ENCODE measurements at regions of chr10 and their contacts with region 1.

Region 1: DNA sequence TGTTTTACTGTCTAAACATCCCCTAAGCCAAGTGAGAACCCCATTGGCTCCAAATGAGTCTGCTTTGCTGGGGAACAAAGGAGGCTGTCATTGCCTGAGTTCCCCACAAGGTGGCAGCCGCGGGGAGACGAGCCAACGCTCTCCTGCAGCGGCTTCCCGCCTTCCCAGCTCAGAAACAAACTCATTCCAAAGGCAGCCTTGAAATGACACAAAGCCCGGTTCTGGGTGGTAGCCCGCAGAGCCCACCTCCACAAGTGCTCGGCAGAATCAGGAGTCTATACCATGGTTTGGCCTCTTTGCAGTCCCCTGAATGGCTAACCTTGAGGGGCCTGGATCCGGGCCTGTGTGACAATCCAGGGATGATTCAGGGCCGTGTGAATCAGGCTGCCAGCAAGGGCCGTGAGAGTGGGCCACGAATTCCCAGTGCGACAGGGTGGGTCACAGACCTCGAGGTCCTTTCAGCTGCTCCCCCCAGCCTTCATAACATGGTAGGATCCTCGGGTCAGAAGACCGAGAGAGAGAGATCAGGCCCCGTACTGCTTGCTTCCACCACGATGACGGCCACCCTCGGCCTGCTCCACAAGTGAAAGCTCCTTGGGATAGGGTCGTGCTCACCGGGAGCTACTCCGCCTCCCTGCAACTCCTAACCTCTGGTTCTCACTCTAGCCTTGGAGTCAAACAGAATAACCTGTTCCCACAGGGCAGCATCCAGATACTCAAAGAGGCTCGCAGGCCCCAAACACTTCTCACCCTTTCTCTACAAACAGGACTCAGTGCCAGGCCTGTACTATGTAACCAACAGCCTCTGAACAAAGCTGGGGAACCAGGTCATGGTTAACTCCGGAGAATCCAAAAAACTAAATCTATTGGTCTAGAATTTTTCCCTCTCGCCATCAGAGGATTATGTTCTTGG is 79.6 kb downstream of the DLG5 start:
- DNase-seq: peak; percentile 98
- ATAC-seq: peak; percentile 68
- H3K4me3 ChIP-seq: no peak overlapping the region
- H3K27ac ChIP-seq: peak overlapping the region; percentile 1
- H3K4me1 ChIP-seq: peaks cover 30% of the 10 kb centered on the region
- H3K27me3 ChIP-seq: no peaks in the 10 kb centered on the region
- CTCF ChIP-seq: peak; percentile 100

Region 2: DNA sequence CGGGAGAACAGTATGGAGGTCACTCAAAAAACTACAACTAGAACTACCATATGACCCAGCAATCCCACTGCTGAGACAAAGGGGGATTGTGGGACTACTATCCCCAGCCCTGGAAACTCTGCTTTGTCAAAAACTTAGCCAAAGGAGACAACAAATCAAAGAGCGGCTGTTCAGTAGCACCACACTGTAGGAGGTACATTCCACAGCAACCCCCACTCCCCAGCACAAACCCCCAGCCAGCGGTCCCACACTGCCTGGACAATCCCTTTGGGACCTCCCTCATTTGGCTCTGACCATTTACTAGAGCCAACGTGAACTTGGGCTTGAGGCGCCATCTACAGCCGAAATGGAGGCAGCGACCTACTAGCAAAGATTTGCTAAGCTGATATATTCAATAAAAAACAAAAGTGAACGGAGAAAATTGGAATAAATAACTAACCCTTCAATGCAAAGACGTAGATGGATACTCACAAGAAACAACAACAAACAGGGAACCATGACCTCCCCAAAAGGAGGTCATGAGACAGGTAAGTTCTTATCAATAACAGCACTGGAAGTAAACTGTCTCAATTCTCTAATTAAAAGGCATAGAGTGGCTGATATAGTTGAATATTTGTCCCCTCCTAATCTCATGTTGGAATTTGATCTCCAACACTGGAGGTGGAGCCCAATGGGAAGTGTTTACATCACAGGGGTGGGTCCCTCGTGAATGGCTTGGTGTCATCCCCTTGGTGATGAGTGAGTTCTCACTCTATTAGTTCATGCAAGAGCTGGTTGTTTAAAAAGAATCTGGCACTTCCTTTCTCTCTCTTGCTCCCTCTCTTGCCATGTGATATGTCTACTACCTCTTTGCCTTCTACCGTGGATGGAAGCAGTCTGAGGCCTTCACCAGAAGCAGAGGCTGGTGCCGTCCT is 90.4 kb before region 1 on chr10:
- CTCF ChIA-PET with region 1: no interaction called
- POLR2A ChIA-PET with region 1: no interaction called
- intact Hi-C with region 1: no loop called
- DNase-seq: peak; percentile 98
- ATAC-seq: peak; percentile 97
- H3K4me3 ChIP-seq: no peak overlapping the region
- H3K27ac ChIP-seq: no peak overlapping the region
- H3K4me1 ChIP-seq: peaks cover 3% of the 10 kb centered on the region; the same call in 1 of the 2 replicates
- H3K27me3 ChIP-seq: no peaks in the 10 kb centered on the region
- CTCF ChIP-seq: peak; percentile 100

Region 3: GRCh38 chr10:77873536-77874380 is 26.8 kb after region 1 on chr10:
- CTCF ChIA-PET with region 1: interaction called, 7 read pairs
- POLR2A ChIA-PET with region 1: no interaction called
- intact Hi-C with region 1: loop called (anchors 2 kb)
- DNase-seq: peak; percentile 99
- ATAC-seq: peak; percentile 90
- H3K4me3 ChIP-seq: peak overlapping the region; percentile 0; the same call in 1 of the 2 replicates
- H3K27ac ChIP-seq: peak overlapping the region; percentile 63
- H3K4me1 ChIP-seq: peaks cover 26% of the 10 kb centered on the region
- H3K27me3 ChIP-seq: no peaks in the 10 kb centered on the region
- CTCF ChIP-seq: peak; percentile 18; the same call in 1 of the 2 replicates

Region 4: DNA sequence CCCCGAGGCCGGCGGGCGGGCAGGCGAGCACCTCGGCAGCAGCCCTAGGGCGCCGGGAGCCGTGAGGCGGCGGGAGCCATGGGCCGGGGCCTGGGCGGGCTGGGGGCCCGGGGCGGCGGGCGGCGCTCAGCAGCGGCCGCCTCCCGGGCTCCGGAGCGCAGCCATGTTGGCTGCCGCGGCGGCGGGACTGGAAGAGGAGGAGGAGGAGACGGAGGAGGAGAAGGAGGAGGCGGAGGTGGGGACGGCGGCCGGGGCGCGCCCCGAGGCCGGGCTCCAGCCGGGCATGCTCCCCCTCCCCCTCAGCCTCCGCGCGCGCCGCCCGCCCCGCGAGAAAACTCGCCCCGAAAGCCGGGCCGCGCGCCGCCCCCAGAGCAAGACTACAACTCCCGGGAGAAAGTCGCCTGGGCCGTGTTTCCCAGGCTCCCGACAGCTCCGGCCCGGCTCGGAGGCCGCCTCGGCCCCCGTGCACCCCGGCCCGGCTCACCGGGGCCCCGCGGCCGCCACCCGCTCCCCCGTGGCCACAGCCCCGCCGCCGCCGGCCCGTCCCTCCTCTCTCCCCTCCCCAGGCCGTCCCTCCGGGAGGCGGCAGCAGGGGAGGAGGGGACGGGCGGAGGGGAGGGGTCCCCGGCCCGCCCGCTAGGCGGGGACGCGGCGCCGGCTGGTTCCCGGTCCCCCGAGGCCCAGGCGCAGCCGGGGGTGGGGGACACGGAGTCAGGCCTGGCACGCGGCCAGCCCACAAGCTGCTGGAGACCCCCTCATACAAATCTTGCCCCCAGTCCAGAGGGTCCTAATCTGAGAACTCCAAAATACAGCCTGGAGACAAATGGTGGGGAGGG is 79.8 kb after region 1 on chr10 and contains the start of gene DLG5:
- CTCF ChIA-PET with region 1: interaction called, 6 read pairs
- POLR2A ChIA-PET with region 1: no interaction called
- intact Hi-C with region 1: loop called (anchors 2 kb)
- DNase-seq: peak; percentile 89
- ATAC-seq: peak; percentile 77
- H3K4me3 ChIP-seq: peak within 1 kb of the TSS; percentile 74
- H3K27ac ChIP-seq: no peak within 1 kb of the TSS
- H3K4me1 ChIP-seq: peaks cover 39% of the 10 kb centered on the region
- H3K27me3 ChIP-seq: no peaks in the 10 kb centered on the region
- CTCF ChIP-seq: peak; percentile 34; the same call in 1 of the 2 replicates
- total RNA-seq, gene DLG5: 118 and 158 TPM in 2 replicates

Region 5: DNA sequence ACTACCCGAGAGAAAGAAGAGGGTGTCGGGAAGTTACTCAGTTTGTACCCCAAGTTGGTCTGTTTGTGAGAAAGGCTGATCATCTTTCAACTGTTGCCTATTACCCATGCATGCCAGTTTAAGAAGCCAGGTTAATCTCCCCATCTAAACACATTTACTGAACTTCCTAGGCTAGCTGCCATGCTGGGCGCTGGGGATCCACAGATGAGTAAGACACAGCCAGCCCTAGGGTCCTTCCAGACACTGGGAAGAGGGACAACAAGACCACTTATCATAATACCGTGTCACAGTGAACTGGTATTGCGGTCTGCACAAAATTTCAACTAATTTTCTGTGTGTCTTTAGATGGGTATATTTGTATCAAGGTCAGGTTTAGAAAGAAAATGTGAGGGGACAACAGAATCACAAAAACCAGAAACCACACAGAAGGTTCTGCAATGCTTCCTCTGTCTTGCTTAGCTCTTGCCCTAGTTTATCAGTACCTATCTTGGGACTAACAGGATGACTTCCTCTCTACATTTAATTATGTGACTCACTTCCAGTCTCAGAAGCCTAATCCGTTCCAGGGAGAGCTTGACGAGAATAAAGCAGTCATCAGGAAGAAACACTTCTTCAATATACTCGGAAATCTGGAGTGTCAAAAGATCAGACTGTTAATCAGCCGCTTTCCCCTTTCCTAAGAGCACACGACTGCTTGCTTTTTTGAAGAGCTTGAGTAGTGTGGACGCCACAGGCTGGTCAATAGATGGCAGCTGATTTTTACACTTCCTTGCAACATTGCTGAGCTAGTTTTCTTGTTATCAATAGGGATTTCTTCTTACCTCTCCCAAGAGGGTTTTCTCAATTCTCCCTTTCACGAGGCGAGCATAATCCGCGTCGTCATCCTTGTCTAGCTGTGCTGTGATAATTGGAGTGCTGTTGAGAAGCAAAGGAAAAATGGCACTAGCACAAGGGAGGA is 136.7 kb after region 1 on chr10:
- CTCF ChIA-PET with region 1: interaction called, 17 read pairs
- POLR2A ChIA-PET with region 1: no interaction called
- intact Hi-C with region 1: loop called (anchors 1 kb)
- DNase-seq: peak; percentile 98
- ATAC-seq: peak; percentile 98
- H3K4me3 ChIP-seq: no peak overlapping the region
- H3K27ac ChIP-seq: peak overlapping the region; percentile 42
- H3K4me1 ChIP-seq: peaks cover 23% of the 10 kb centered on the region
- H3K27me3 ChIP-seq: no peaks in the 10 kb centered on the region
- CTCF ChIP-seq: peak; percentile 24; the same call in 1 of the 2 replicates

Region 6: GRCh38 chr10:78029269-78030226 is 182.6 kb after region 1 on chr10 and contains the start of gene POLR3A:
- CTCF ChIA-PET with region 1: interaction called, 12 read pairs
- POLR2A ChIA-PET with region 1: interaction called, 4 read pairs
- intact Hi-C with region 1: loop called (anchors 1 kb)
- DNase-seq: peak; percentile 100
- ATAC-seq: peak; percentile 48
- H3K4me3 ChIP-seq: peak within 1 kb of the TSS; percentile 69
- H3K27ac ChIP-seq: peak within 1 kb of the TSS; percentile 23
- H3K4me1 ChIP-seq: peaks cover 47% of the 10 kb centered on the region
- H3K27me3 ChIP-seq: no peaks in the 10 kb centered on the region
- CTCF ChIP-seq: peak; percentile 100
- total RNA-seq, gene POLR3A: 97.0 and 97.2 TPM in 2 replicates